Right ventricle myocardium inferior (tissue), 1 donor: ENCODE measurements at regions of chr11 and their contacts with region 1.

Region 1: DNA sequence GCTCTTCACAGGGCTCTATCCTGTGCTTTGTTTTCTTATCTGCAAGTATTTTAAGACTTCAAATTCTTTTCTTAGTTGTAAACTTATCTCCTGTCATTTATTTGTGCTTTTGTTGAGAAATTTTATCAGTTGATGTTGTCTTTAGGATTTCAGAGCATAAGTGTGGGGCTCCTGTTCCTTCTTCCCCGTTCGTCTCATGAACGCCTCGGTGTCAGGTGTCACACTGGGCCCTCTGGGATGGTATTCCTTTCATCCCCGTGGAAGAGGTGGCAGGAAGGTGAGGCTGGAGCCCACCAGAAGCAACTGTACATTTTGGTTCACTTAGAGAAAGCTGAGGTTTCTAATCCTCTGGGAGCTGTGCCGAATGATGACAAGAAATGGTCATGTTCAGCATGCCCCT is 17.9 kb downstream of the NADSYN1 start:
- DNase-seq: no peak
- ATAC-seq: no peak

Region 2: DNA sequence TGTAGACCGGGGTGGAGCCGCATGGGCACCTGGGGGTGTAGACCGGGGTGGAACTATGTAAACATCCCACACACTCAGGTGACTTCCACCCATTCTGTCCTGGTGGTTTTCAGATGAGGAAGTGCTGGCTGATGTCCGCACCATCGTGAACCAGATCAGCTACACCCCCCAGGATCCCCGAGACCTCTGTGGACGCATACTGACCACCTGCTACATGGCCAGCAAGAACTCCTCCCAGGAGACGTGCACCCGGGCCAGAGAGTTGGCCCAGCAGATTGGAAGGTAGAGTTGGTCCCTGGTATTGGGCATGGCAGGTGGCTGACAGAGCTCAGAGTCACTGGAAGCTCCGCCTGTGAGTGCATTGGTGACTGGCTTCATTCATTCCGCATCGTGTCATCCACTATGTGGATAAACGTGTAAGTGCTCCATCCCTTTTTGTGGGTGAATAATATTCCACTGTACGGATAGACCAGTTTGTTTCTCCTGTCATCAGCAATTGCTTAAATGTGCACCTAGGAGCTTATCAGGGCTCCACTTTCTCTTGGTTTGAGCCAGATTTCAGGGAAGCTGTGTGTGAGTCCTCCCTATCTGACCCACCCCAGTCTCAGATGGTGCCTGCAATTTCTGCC is 11.9 kb after region 1 on chr11:
- intact Hi-C with region 1: loop called (anchors 1 kb)
- DNase-seq: peak; percentile 57
- ATAC-seq: no peak